Endothelial cell of umbilical vein (primary cell): ENCODE measurements at regions of chr5 and their contacts with region 1.

Region 1: GRCh38 chr5:172984243-172984953 is 827 bp downstream of the ATP6V0E1 start:
- DNase-seq: peak; percentile 92
- H3K4me3 ChIP-seq: peak overlapping the region; percentile 42 to 93 (median 92)
- H3K27ac ChIP-seq: peak overlapping the region; percentile 81
- H3K4me1 ChIP-seq: peaks cover 13% of the 10 kb centered on the region
- H3K27me3 ChIP-seq: no peaks in the 10 kb centered on the region
- CTCF ChIP-seq: peak; percentile 64 to 75
- POLR2A ChIP-seq: no peak

Region 2: GRCh38 chr5:172707285-172708182 is 276.9 kb before region 1 on chr5:
- CTCF ChIA-PET with region 1: interaction called, 20 read pairs
- POLR2A ChIA-PET with region 1: no interaction called
- dilution Hi-C with region 1: no loop called
- intact Hi-C with region 1: loop called (anchors 2 kb)
- DNase-seq: peak; percentile 62
- H3K4me3 ChIP-seq: no peak overlapping the region
- H3K27ac ChIP-seq: no peak overlapping the region
- H3K4me1 ChIP-seq: no peaks in the 10 kb centered on the region
- H3K27me3 ChIP-seq: no peaks in the 10 kb centered on the region
- CTCF ChIP-seq: peak; percentile 61 to 64
- POLR2A ChIP-seq: no peak

Region 3: DNA sequence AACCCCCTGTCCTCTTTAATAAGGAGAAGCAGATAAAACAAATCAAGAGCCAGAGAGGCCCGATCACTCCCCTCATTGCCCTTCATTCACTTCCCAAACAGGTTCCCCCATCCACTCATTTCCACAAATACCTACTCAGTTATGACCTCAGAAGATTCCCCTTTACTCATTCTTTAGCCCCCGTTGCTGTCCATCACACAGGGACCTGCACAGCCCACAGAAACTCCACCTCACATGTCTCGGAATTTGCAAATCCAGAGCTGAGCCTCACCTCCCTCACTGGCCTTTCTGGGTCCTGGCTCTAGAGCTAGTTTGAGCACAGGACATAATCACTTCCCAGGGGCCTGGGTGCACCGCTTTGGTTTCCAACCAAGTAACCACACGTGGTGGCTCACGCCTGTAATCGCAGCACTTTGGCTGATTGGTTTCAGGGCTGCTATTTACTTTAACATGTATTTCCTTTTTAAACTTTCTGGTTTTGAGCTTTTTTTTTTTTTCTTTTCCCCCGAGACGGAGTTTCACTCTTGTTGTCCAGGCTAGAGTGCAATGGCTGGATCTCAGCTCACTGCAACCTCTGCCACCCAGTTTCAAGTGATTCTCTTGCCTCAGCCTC is 16.9 kb after region 1 on chr5:
- CTCF ChIA-PET with region 1: interaction called, 12 read pairs
- POLR2A ChIA-PET with region 1: no interaction called
- dilution Hi-C with region 1: no loop called
- intact Hi-C with region 1: loop called (anchors 2 kb)
- DNase-seq: no peak
- H3K4me3 ChIP-seq: no peak overlapping the region
- H3K27ac ChIP-seq: no peak overlapping the region
- H3K4me1 ChIP-seq: peaks cover 14% of the 10 kb centered on the region
- H3K27me3 ChIP-seq: no peaks in the 10 kb centered on the region
- CTCF ChIP-seq: no peak
- POLR2A ChIP-seq: no peak

Region 4: DNA sequence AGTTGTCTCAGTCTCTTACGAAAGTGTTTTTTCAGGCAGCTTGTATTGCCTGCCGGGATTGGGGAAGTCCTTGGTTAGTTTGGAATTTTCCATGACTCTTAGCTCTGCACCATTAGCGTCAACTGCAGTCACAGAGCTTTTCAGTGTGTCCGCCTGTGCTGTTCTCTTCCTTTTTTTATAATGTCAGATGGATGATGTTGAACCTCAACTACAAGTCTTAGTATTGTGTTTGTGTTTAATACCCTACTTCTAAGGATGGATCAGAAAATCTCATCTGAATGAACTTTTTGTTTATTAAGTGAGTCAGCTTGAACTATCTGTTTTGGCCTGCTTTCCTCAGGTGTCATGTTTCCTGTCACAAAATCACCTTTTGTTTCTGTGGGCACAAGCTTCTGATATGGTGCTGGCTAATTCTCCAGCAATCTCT is 32.2 kb after region 1 on chr5:
- CTCF ChIA-PET with region 1: interaction called, 10 read pairs
- POLR2A ChIA-PET with region 1: no interaction called
- dilution Hi-C with region 1: no loop called
- intact Hi-C with region 1: no loop called
- DNase-seq: peak; percentile 76
- H3K4me3 ChIP-seq: no peak overlapping the region
- H3K27ac ChIP-seq: peak overlapping the region; percentile 13
- H3K4me1 ChIP-seq: peaks cover 11% of the 10 kb centered on the region
- H3K27me3 ChIP-seq: no peaks in the 10 kb centered on the region
- CTCF ChIP-seq: no peak
- POLR2A ChIP-seq: no peak

Region 5: GRCh38 chr5:173057062-173057924 is 72.9 kb after region 1 on chr5:
- CTCF ChIA-PET with region 1: interaction called, 27 read pairs
- POLR2A ChIA-PET with region 1: interaction called, 4 read pairs
- dilution Hi-C with region 1: no loop called
- intact Hi-C with region 1: loop called (anchors 1 kb)
- DNase-seq: peak; percentile 99
- H3K4me3 ChIP-seq: peak overlapping the region; percentile 83 to 89 (median 86)
- H3K27ac ChIP-seq: peak overlapping the region; percentile 86
- H3K4me1 ChIP-seq: peaks cover 13% of the 10 kb centered on the region
- H3K27me3 ChIP-seq: no peaks in the 10 kb centered on the region
- CTCF ChIP-seq: peak in 1 of 2 donors; percentile 28
- POLR2A ChIP-seq: peak; percentile 37

Region 6: DNA sequence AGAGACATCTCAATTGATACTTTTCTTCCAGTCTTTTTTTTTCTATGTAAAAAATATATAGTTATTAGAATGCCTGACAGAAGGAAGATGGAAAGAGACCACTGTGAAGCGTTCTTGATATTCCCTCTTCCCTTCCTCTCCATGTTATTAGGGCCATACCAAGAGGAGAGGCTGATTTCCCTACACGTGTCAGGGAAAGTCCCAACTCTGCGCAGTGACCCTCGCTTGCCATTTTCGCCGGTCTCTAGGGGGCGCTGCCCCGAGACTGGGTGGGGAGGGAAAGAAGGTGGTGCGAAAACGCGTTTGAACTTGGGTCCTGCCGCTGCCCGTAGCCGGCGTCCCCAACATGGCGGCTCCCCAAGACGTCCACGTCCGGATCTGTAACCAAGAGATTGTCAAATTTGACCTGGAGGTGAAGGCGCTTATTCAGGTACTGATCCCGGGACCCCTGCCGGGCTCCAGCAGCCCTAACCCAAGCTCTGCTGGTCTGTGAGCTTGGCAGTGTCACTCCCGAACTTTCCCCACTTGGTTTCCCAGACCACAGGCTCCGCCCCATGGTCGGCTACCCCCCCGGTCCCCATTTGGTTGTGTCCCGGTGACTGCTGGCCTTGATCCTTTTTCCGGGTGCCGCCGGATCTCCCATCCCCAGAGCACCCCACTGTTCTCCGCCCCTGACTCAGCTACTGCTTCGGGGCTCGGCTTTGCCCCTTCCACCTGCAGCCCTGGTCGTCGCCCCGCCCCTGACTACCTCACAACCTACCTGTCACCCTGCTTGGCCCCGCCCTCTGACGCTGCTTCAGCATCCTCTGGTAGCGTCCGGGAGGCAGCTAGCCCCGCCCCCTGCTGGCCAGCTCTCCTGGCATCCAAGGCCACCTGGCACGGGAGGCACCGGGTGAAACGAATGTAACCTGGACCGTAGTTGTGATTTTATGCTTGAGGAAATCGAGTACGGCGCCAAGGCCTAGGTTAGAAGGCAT is 160.1 kb after region 1 on chr5 and contains the start of gene BNIP1:
- CTCF ChIA-PET with region 1: interaction called, 16 read pairs
- POLR2A ChIA-PET with region 1: no interaction called
- dilution Hi-C with region 1: no loop called
- intact Hi-C with region 1: loop called (anchors 1 kb)
- DNase-seq: peak; percentile 95
- H3K4me3 ChIP-seq: peak within 1 kb of the TSS; percentile 77 to 97 (median 89)
- H3K27ac ChIP-seq: peak within 1 kb of the TSS; percentile 89
- H3K4me1 ChIP-seq: peaks cover 4% of the 10 kb centered on the region
- H3K27me3 ChIP-seq: no peaks in the 10 kb centered on the region
- CTCF ChIP-seq: peak; percentile 98
- POLR2A ChIP-seq: peak; percentile 73
- total RNA-seq, gene BNIP1: 15.7 and 19.7 TPM in 2 replicates

Region 7: GRCh38 chr5:173283318-173284288 is 299.2 kb after region 1 on chr5:
- CTCF ChIA-PET with region 1: interaction called, 8 read pairs
- POLR2A ChIA-PET with region 1: no interaction called
- dilution Hi-C with region 1: no loop called
- intact Hi-C with region 1: loop called (anchors 1 kb)
- DNase-seq: peak; percentile 62
- H3K4me3 ChIP-seq: no peak overlapping the region
- H3K27ac ChIP-seq: no peak overlapping the region
- H3K4me1 ChIP-seq: peaks cover 2% of the 10 kb centered on the region
- H3K27me3 ChIP-seq: peaks cover 16 to 18% of the 10 kb centered on the region in 2 experiments
- CTCF ChIP-seq: peak; percentile 84 to 89
- POLR2A ChIP-seq: no peak

Region 8: GRCh38 chr5:173454754-173455614 is 470.6 kb after region 1 on chr5:
- CTCF ChIA-PET with region 1: no interaction called
- POLR2A ChIA-PET with region 1: no interaction called
- dilution Hi-C with region 1: no loop called
- intact Hi-C with region 1: no loop called
- DNase-seq: peak; percentile 9
- H3K4me3 ChIP-seq: no peak overlapping the region
- H3K27ac ChIP-seq: peak overlapping the region; percentile 92
- H3K4me1 ChIP-seq: peaks cover 23% of the 10 kb centered on the region
- H3K27me3 ChIP-seq: no peaks in the 10 kb centered on the region
- CTCF ChIP-seq: no peak
- POLR2A ChIP-seq: no peak